ENCODE measurements at regions of chr2 and their contacts with region 1.

Region 1: GRCh38 chr2:23404426-23404825 is 19.4 kb downstream of the KLHL29 start:
- DNase-seq: no peak
- H3K4me3 Mint-ChIP-seq: no peak overlapping the region
- H3K27ac Mint-ChIP-seq: no peak overlapping the region
- H3K4me1 Mint-ChIP-seq: peaks cover 10% of the 10 kb centered on the region
- H3K27me3 Mint-ChIP-seq: peaks cover 9% of the 10 kb centered on the region

Region 2: GRCh38 chr2:23566236-23567142 is 162.1 kb after region 1 on chr2:
- intact Hi-C with region 1: loop called (anchors 10 kb)
- DNase-seq: no peak
- H3K4me3 Mint-ChIP-seq: no peak overlapping the region
- H3K27ac Mint-ChIP-seq: no peak overlapping the region
- H3K4me1 Mint-ChIP-seq: no peaks in the 10 kb centered on the region
- H3K27me3 Mint-ChIP-seq: peaks cover 2% of the 10 kb centered on the region

Measured in activated T-helper 1 cell treated with anti-CD3 and anti-CD28 coated beads, Interleukin-12 subunit alpha, Interleukin-12 subunit beta, Interleukin-2, Interleukin-4 antibody, amounts not matched to agents 30 ng/mL and 10 ng/mL and 1 ng/mL, durations not matched to agents 14 hours and 24 hours and 36 hours (primary cell).